Activated CD4-positive, alpha-beta memory T cell treated with anti-CD3 and anti-CD28 coated beads, Interleukin-2, amount 10 ng/mL, durations not matched to agents 7 days and 5 days (primary cell): ENCODE measurements at regions of chr6 and their contacts with region 1.

Region 1: GRCh38 chr6:42890311-42891198 is 11.1 kb downstream of the RPL7L1 start:
- DNase-seq: peak; percentile 93
- H3K4me3 Mint-ChIP-seq: peak overlapping the region; percentile 87
- H3K27ac Mint-ChIP-seq: peak overlapping the region; percentile 84
- H3K4me1 Mint-ChIP-seq: peaks cover 23% of the 10 kb centered on the region
- H3K27me3 Mint-ChIP-seq: no peaks in the 10 kb centered on the region

Region 2: GRCh38 chr6:42864602-42865001 is 26.0 kb before region 1 on chr6:
- CTCF ChIA-PET with region 1: no interaction called
- POLR2A ChIA-PET with region 1: no interaction called
- DNase-seq: no peak
- H3K4me3 Mint-ChIP-seq: no peak overlapping the region
- H3K27ac Mint-ChIP-seq: no peak overlapping the region
- H3K4me1 Mint-ChIP-seq: no peaks in the 10 kb centered on the region
- H3K27me3 Mint-ChIP-seq: no peaks in the 10 kb centered on the region

Region 3: GRCh38 chr6:42901536-42901957 is 11.0 kb after region 1 on chr6:
- CTCF ChIA-PET with region 1: interaction called, 12 read pairs
- POLR2A ChIA-PET with region 1: interaction called, 5 read pairs
- DNase-seq: peak; percentile 74
- H3K4me3 Mint-ChIP-seq: no peak overlapping the region
- H3K27ac Mint-ChIP-seq: no peak overlapping the region
- H3K4me1 Mint-ChIP-seq: peaks cover 13% of the 10 kb centered on the region
- H3K27me3 Mint-ChIP-seq: peaks cover 2% of the 10 kb centered on the region